ENCODE measurements at regions of chr5 and their contacts with region 1.

Region 1: GRCh38 chr5:180340856-180341255 is 12.3 kb downstream of the GFPT2 start:
- DNase-seq: no peak
- H3K4me3 ChIP-seq: no peak overlapping the region
- H3K27ac ChIP-seq: no peak overlapping the region
- H3K4me1 ChIP-seq: no peaks in the 10 kb centered on the region
- H3K27me3 ChIP-seq: no peaks in the 10 kb centered on the region
- CTCF ChIP-seq: no peak
- POLR2A ChIP-seq: no peak

Region 2: GRCh38 chr5:180155365-180155926 is 185.4 kb before region 1 on chr5:
- intact Hi-C with region 1: no loop called
- DNase-seq: peak; percentile 7 to 34
- H3K4me3 ChIP-seq: no peak overlapping the region
- H3K27ac ChIP-seq: no peak overlapping the region
- H3K4me1 ChIP-seq: no peaks in the 10 kb centered on the region
- H3K27me3 ChIP-seq: no peaks in the 10 kb centered on the region
- CTCF ChIP-seq: no peak
- POLR2A ChIP-seq: no peak

Region 3: GRCh38 chr5:180304431-180305375 is 36.2 kb before region 1 on chr5:
- intact Hi-C with region 1: loop called (anchors 1 kb)
- DNase-seq: no peak
- H3K4me3 ChIP-seq: no peak overlapping the region
- H3K27ac ChIP-seq: no peak overlapping the region
- H3K4me1 ChIP-seq: no peaks in the 10 kb centered on the region
- H3K27me3 ChIP-seq: no peaks in the 10 kb centered on the region
- CTCF ChIP-seq: no peak
- POLR2A ChIP-seq: no peak